ENCODE measurements at regions of chr2 and their contacts with region 1.

Region 1: DNA sequence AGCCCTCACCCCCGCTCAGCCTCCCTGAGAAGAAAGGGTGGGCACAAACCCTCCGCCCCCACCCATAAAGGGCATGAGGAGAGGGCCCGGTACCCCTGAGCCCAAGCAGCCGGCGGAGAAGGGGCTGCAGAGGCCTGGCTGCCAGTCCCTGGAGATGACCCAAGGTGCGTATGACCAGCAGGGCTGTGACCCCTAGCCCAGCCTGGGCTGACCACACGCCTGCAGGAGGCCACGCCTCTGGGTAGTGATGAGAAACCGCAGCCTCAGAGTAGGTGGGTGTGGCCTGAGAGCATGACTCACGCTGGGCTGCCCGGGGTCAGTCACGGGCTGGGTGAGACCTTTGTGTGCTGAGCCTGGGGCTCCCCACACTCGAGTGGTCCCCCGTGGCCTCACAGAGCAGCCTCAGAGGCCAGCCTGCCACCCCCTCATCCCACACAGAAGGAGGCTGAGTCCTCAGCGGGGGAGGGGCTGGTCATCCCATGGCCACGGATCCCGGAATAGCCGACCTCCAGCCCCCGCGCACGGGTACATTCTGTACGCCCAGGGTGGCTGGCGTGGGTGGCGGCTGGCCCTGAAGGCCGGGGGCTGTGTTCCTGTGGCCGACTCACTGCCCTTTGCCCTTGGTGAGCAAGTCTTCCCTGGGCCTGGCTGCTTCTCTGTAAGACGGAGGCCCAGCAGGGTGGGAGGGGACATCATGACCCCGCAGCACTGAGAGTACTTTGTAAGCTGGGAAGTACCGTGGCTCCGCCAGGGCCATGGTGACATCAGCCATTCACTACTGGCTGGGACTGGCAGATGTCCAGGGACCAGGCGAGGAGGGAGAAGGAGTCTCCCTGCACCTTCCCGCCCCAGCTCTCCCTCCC is 110.8 kb upstream of the OTOS start:
- DNase-seq: peak; percentile 93
- ATAC-seq: peak; percentile 87 to 95

Region 2: GRCh38 chr2:240369801-240370585 is 118.8 kb after region 1 on chr2:
- intact Hi-C with region 1: loop called in 1 of 2 experiments (anchors 5 kb)
- DNase-seq: peak; percentile 81
- ATAC-seq: peak; percentile 85 to 86

Region 3: DNA sequence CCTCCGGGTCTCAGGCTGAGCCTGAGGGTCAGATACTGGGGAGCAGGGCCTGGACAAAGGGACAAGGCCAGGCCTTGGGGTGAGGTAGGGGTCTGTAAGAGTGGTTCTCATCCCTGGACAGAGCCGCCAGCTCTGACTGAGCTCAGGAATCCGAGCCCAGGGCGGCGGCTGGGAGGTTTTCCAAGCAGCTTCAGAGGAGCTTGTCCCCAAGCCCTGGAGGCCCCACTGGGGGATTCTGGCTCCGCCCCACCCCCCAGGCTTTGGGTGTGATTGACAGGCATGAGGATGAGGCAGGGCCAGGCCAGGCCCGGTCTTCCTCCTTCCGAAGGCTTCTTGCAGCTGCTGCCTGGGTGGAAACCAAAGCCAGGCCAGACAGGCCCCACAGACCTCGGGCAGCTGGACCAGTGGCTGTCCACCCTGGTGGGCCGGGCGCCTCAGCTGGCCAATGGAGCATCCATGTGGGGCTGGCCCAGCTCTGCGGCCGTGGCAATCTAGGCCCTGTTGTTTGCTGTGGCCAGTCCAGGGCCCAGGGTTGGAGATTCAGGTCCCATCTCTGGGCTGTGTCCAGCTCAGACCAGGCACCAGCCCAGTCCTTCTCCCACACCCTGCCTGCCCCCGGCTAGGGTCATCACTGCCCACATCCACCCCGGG is 161.1 kb after region 1 on chr2:
- intact Hi-C with region 1: no loop called
- DNase-seq: peak; percentile 23
- ATAC-seq: no peak